H1 (cell line): ENCODE measurements at regions of chr19 and their contacts with region 1.

Region 1: GRCh38 chr19:18281082-18282020 is at the start of gene JUND:
- DNase-seq: peak; percentile 90 to 97
- H3K4me3 ChIP-seq: peak within 1 kb of the TSS; percentile 88 to 99 (median 92)
- H3K27ac ChIP-seq: peak within 1 kb of the TSS; percentile 95
- H3K4me1 ChIP-seq: peaks cover 4 to 14% (median 8%) of the 10 kb centered on the region in 4 experiments; a peak in 5 of 7 replicates
- H3K27me3 ChIP-seq: no peaks in the 10 kb centered on the region; a peak in 1 of 7 replicates
- CTCF ChIP-seq: no peak
- EP300 ChIP-seq: peak; percentile 80 to 96
- POLR2A ChIP-seq: peak in 1 of 2 experiments; percentile 99; a peak in 2 of 3 replicates
- RAD21 ChIP-seq: 0 out of 4 replicates have a peak, but pooled peaks of 1 of the 2 experiments have one; percentile 0
- total RNA-seq, gene JUND: 77.5 and 95.8 TPM in 2 replicates

Region 2: DNA sequence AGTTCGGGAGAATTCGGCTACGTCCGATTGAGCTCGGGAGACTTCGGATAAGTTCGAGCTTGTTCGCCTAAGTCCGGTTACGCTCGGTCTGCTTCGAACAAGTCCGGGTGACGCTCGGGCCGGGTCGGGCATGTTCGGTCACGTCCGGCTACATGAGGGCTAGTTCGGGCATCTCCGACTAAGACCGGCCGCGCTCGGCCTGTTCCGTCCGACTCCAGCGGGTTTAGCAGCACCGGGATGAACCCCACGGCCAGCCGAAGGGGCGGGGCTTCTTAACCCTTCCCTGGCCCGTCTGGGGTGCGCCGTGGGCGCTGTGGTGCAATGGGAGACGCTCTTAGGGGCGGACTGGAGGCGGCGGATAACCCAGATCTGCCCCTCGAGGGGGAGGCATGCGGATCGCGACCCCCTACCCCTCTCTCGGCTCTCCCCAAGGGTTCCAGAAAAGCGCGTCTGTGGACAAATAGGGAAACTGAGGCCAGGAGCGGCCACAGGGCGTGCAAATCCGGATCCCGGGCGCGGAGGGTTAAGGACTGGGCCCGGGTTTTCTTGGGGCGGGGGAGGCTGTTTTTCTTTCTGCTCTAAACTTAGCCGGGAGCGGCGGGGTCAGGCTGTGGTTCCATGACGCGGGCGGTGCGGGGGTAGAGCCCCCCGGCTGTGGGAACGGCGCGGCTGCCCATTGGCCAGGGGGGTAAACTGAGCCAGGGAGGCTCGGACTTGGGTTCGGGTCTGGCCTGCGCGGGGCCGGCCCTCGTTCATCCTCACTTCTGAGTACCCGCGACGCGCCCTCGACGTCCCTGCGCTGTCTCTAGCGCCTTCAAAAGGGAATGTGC is 56.6 kb before region 1 on chr19:
- CTCF ChIA-PET with region 1: interaction called, 15 read pairs
- POLR2A ChIA-PET with region 1: interaction called, 18 read pairs
- DNase-seq: peak; percentile 99
- H3K4me3 ChIP-seq: peak overlapping the region; percentile 54 to 77 (median 68)
- H3K27ac ChIP-seq: peak overlapping the region; percentile 89
- H3K4me1 ChIP-seq: peaks cover 0 to 20% (median 16%) of the 10 kb centered on the region in 4 experiments; a peak in 6 of 7 replicates
- H3K27me3 ChIP-seq: peaks cover 10 to 23% (median 17%) of the 10 kb centered on the region in 4 experiments
- CTCF ChIP-seq: no peak
- EP300 ChIP-seq: no peak
- POLR2A ChIP-seq: no peak
- RAD21 ChIP-seq: no peak

Region 3: GRCh38 chr19:18251587-18252369 is 29.6 kb before region 1 on chr19:
- CTCF ChIA-PET with region 1: interaction called, 172 read pairs
- POLR2A ChIA-PET with region 1: interaction called, 62 read pairs
- DNase-seq: peak; percentile 70 to 97
- H3K4me3 ChIP-seq: no peak overlapping the region
- H3K27ac ChIP-seq: no peak overlapping the region
- H3K4me1 ChIP-seq: peaks cover 5 to 16% (median 13%) of the 10 kb centered on the region in 4 experiments
- H3K27me3 ChIP-seq: peaks cover 0 to 3% (median 0%) of the 10 kb centered on the region in 4 experiments; a peak in 3 of 7 replicates
- CTCF ChIP-seq: peak; percentile 86 to 96 (median 93)
- EP300 ChIP-seq: no peak
- POLR2A ChIP-seq: no peak
- RAD21 ChIP-seq: peak; percentile 99

Region 4: DNA sequence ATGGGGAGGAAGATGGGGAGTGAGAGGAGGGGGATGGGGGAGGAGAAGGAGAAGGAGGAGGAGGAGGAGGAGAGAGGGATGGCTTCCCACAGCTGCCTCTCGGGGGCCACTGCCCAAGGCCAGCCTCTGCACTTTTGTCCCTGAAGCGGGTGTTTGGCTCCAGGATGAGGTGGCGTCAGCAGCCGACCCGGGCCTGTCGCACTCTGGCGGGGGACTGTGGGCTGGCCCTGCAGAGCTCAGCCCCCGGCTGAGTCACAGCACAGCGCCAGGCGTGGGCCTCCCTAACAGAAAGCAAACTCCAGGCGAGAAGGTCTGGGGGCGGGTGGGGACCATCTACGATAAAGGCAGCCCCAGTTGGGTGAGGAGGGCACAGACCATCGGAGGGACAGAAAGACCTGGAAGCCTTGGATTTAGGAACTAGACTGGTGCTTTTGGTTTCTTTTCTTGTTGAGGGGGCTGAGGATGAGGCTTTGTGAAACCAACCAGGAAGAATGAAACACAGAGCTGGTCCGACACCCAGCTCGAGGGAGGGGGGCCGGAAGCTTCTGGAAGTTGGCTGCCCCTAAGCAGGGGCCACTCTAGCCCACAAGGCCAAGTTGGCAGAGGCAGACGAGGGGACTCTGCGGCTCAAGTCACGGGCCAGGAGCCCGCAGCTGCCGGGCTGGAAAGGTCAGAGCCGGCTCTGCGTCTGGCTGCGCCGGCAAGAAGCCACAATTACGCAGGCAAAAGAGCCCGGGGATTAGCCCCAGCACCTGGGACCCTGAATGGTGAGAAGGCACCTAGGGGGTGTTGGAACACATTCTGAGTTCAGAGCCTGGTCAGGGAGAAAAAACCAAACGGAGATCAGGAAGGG is 23.3 kb after region 1 on chr19:
- CTCF ChIA-PET with region 1: interaction called, 48 read pairs
- POLR2A ChIA-PET with region 1: interaction called, 200 read pairs
- DNase-seq: no peak
- H3K4me3 ChIP-seq: peak overlapping the region in 3 of 4 experiments; percentile 14 to 49 (median 34); a peak in 5 of 8 replicates
- H3K27ac ChIP-seq: peak overlapping the region; percentile 9; the same call in 1 of the 2 replicates
- H3K4me1 ChIP-seq: peaks cover 0 to 25% (median 10%) of the 10 kb centered on the region in 4 experiments; a peak in 6 of 7 replicates
- H3K27me3 ChIP-seq: no peaks in the 10 kb centered on the region
- CTCF ChIP-seq: no peak
- EP300 ChIP-seq: no peak
- POLR2A ChIP-seq: no peak
- RAD21 ChIP-seq: no peak

Region 5: GRCh38 chr19:18340190-18340989 is 59.0 kb after region 1 on chr19 and contains the start of gene PGPEP1:
- CTCF ChIA-PET with region 1: interaction called, 51 read pairs
- POLR2A ChIA-PET with region 1: interaction called, 224 read pairs
- DNase-seq: peak in 1 of 2 experiments; percentile 97
- H3K4me3 ChIP-seq: peak within 1 kb of the TSS; percentile 55 to 85 (median 62)
- H3K27ac ChIP-seq: no peak within 1 kb of the TSS
- H3K4me1 ChIP-seq: peaks cover 0 to 11% (median 7%) of the 10 kb centered on the region in 4 experiments; a peak in 6 of 7 replicates
- H3K27me3 ChIP-seq: 0 out of 7 replicates have a peak, but pooled peaks cover 0 to 2% (median 0%) of the 10 kb centered on the region in 4 experiments
- CTCF ChIP-seq: no peak
- EP300 ChIP-seq: no peak
- POLR2A ChIP-seq: 0 out of 3 replicates have a peak, but pooled peaks of 1 of the 2 experiments have one; percentile 26
- RAD21 ChIP-seq: no peak
- total RNA-seq, gene PGPEP1: 33.2 and 33.4 TPM in 2 replicates

Region 6: GRCh38 chr19:18388100-18388959 is 107.0 kb after region 1 on chr19:
- CTCF ChIA-PET with region 1: interaction called, 33 read pairs
- POLR2A ChIA-PET with region 1: interaction called, 16 read pairs
- DNase-seq: peak in 1 of 2 experiments; percentile 98
- H3K4me3 ChIP-seq: peak overlapping the region in 3 of 4 experiments; percentile 17 to 46 (median 20); a peak in 5 of 8 replicates
- H3K27ac ChIP-seq: no peak overlapping the region
- H3K4me1 ChIP-seq: peaks cover 3 to 4% (median 3%) of the 10 kb centered on the region in 4 experiments
- H3K27me3 ChIP-seq: peaks cover 0 to 23% (median 14%) of the 10 kb centered on the region in 4 experiments; a peak in 6 of 7 replicates
- CTCF ChIP-seq: peak; percentile 97 to 99 (median 98)
- EP300 ChIP-seq: no peak
- POLR2A ChIP-seq: no peak
- RAD21 ChIP-seq: peak; percentile 52 to 73; a peak in 3 of 4 replicates

Region 7: GRCh38 chr19:18436671-18437490 is 155.5 kb after region 1 on chr19:
- CTCF ChIA-PET with region 1: no interaction called
- POLR2A ChIA-PET with region 1: interaction called, 11 read pairs
- DNase-seq: peak in 1 of 2 experiments; percentile 92
- H3K4me3 ChIP-seq: peak overlapping the region; percentile 62 to 94 (median 78)
- H3K27ac ChIP-seq: peak overlapping the region; percentile 58; the same call in 1 of the 2 replicates
- H3K4me1 ChIP-seq: peaks cover 5 to 39% (median 26%) of the 10 kb centered on the region in 4 experiments
- H3K27me3 ChIP-seq: no peaks in the 10 kb centered on the region; a peak in 1 of 7 replicates
- CTCF ChIP-seq: no peak
- EP300 ChIP-seq: no peak
- POLR2A ChIP-seq: peak in 1 of 2 experiments; percentile 33; a peak in 2 of 3 replicates
- RAD21 ChIP-seq: no peak